WTC11 (cell line): ENCODE measurements at regions of chr1 and their contacts with region 1.

Region 1: GRCh38 chr1:180926164-180926981 is 13.7 kb downstream of the KIAA1614 start:
- DNase-seq: no peak
- ATAC-seq: no peak
- H3K4me3 Mint-ChIP-seq: no peak overlapping the region
- H3K27ac Mint-ChIP-seq: no peak overlapping the region; the same call in 1 of the 2 replicates
- H3K4me1 Mint-ChIP-seq: peaks cover 69% of the 10 kb centered on the region
- H3K27me3 Mint-ChIP-seq: no peaks in the 10 kb centered on the region
- CTCF ChIP-seq: no peak

Region 2: GRCh38 chr1:180912801-180913565 is 13.4 kb before region 1 on chr1 and contains the start of gene KIAA1614:
- CTCF ChIA-PET with region 1: interaction called, 20 read pairs
- POLR2A ChIA-PET with region 1: interaction called, 22 read pairs
- DNase-seq: peak; percentile 58
- ATAC-seq: peak; percentile 49
- H3K4me3 Mint-ChIP-seq: peak within 1 kb of the TSS; percentile 79
- H3K27ac Mint-ChIP-seq: no peak within 1 kb of the TSS
- H3K4me1 Mint-ChIP-seq: peaks cover 39% of the 10 kb centered on the region
- H3K27me3 Mint-ChIP-seq: peaks cover 41% of the 10 kb centered on the region
- CTCF ChIP-seq: no peak
- total RNA-seq, gene KIAA1614: 1.8 to 3.3 TPM (median 2.1 TPM) in 3 replicates

Region 3: GRCh38 chr1:181010789-181011188 is 84.4 kb after region 1 on chr1:
- CTCF ChIA-PET with region 1: no interaction called
- POLR2A ChIA-PET with region 1: no interaction called
- DNase-seq: no peak
- ATAC-seq: no peak
- H3K4me3 Mint-ChIP-seq: no peak overlapping the region
- H3K27ac Mint-ChIP-seq: no peak overlapping the region
- H3K4me1 Mint-ChIP-seq: peaks cover 21% of the 10 kb centered on the region
- H3K27me3 Mint-ChIP-seq: no peaks in the 10 kb centered on the region
- CTCF ChIP-seq: no peak

Region 4: GRCh38 chr1:181021811-181022434 is 95.5 kb after region 1 on chr1:
- CTCF ChIA-PET with region 1: no interaction called
- POLR2A ChIA-PET with region 1: interaction called, 17 read pairs
- DNase-seq: peak; percentile 50
- ATAC-seq: peak; percentile 5
- H3K4me3 Mint-ChIP-seq: peak overlapping the region; percentile 96
- H3K27ac Mint-ChIP-seq: peak overlapping the region; percentile 96
- H3K4me1 Mint-ChIP-seq: peaks cover 21% of the 10 kb centered on the region
- H3K27me3 Mint-ChIP-seq: peaks cover 9% of the 10 kb centered on the region
- CTCF ChIP-seq: no peak